Breast epithelium (tissue), 4 donors: ENCODE measurements at regions of chr5 and their contacts with region 1.

Region 1: GRCh38 chr5:163529698-163530097 is 24.3 kb downstream of the MAT2B start:
- DNase-seq: no peak
- H3K4me3 ChIP-seq: no peak overlapping the region
- H3K27ac ChIP-seq: no peak overlapping the region
- H3K4me1 ChIP-seq: no peaks in the 10 kb centered on the region
- H3K27me3 ChIP-seq: no peaks in the 10 kb centered on the region
- CTCF ChIP-seq: no peak
- POLR2A ChIP-seq: no peak

Region 2: DNA sequence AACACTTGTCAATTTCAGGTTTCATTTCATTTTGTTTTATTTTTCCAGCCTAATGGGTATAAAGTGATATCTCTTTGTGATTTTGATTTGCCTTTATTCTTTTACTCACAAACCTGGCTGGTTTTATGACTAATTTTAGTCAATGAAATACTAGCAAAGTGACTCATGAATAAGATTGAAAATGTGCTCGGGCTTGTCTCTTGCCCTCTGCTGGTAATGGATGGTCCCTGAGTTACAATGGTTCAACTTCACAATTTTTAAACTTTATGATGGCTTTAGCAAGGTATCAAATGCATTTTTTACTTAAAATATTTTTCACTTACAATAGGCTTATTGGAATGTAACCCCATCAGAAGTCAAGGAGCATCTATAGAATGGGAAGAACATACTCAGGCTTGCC is 523.7 kb before region 1 on chr5:
- intact Hi-C with region 1: loop called (anchors 10 kb)
- DNase-seq: no peak
- H3K4me3 ChIP-seq: no peak overlapping the region
- H3K27ac ChIP-seq: no peak overlapping the region
- H3K4me1 ChIP-seq: no peaks in the 10 kb centered on the region
- H3K27me3 ChIP-seq: no peaks in the 10 kb centered on the region
- CTCF ChIP-seq: no peak
- POLR2A ChIP-seq: no peak

Region 3: DNA sequence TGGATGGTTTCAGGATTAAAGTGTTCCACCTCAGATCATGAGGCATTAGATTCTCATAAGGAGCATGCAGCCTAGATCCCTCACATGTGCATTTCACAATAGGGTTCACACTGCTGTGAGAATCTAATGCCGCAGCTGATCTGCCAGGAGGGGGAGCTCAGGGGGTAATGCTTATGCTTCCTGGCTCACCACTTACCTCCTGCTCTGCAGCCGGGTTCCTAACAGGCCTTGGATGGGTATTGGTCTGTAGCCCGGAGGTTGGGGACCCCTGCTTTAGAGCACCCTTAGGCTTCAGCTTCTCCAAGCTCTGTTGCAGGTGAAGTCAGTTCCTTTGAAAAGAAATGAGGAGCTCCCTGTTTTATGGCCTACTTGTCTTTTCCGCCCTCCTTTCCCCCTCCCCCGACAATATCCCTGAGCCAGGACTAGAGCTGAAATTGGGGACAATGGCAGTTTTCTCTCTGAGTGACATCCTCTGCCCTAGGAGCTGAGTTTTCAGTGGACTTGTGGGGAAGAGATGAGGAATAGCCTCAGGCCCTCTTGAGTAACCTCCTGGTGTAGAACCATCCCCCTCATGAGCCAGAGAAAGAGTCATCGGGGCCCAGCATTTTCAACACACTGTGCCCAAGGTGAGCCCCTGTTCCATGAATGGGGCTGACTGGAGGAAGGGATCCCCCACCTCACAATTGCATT is 40.5 kb before region 1 on chr5:
- intact Hi-C with region 1: no loop called
- DNase-seq: no peak
- H3K4me3 ChIP-seq: no peak overlapping the region
- H3K27ac ChIP-seq: no peak overlapping the region
- H3K4me1 ChIP-seq: no peaks in the 10 kb centered on the region
- H3K27me3 ChIP-seq: no peaks in the 10 kb centered on the region
- CTCF ChIP-seq: no peak
- POLR2A ChIP-seq: no peak